GM12878 (cell line): ENCODE measurements at regions of chr17 and their contacts with region 1.

Region 1: GRCh38 chr17:13520899-13521572 is 80.7 kb downstream of the HS3ST3A1 start:
- DNase-seq: peak; percentile 13
- ATAC-seq: no peak
- H3K4me3 ChIP-seq: no peak overlapping the region
- H3K27ac ChIP-seq: no peak overlapping the region
- H3K4me1 ChIP-seq: no peaks in the 10 kb centered on the region
- H3K27me3 ChIP-seq: no peaks in the 10 kb centered on the region
- CTCF ChIP-seq: no peak
- EP300 ChIP-seq: no peak
- POLR2A ChIP-seq: no peak
- RAD21 ChIP-seq: no peak

Region 2: GRCh38 chr17:13457783-13458182 is 63.3 kb before region 1 on chr17:
- CTCF ChIA-PET with region 1: no interaction called
- POLR2A ChIA-PET with region 1: no interaction called
- RAD21 ChIA-PET with region 1: no interaction called
- SMC1A ChIA-PET with region 1: no interaction called
- in situ Hi-C with region 1: no loop called
- intact Hi-C with region 1: loop called (anchors 10 kb)
- DNase-seq: no peak
- ATAC-seq: no peak
- H3K4me3 ChIP-seq: no peak overlapping the region
- H3K27ac ChIP-seq: no peak overlapping the region
- H3K4me1 ChIP-seq: no peaks in the 10 kb centered on the region
- H3K27me3 ChIP-seq: no peaks in the 10 kb centered on the region
- CTCF ChIP-seq: no peak
- EP300 ChIP-seq: no peak
- POLR2A ChIP-seq: no peak
- RAD21 ChIP-seq: no peak

Region 3: GRCh38 chr17:13490906-13491482 is 30.0 kb before region 1 on chr17:
- CTCF ChIA-PET with region 1: interaction called, 6 read pairs
- POLR2A ChIA-PET with region 1: interaction called, 6 read pairs
- RAD21 ChIA-PET with region 1: interaction called, 4 read pairs
- SMC1A ChIA-PET with region 1: interaction called, 16 read pairs
- in situ Hi-C with region 1: no loop called
- intact Hi-C with region 1: no loop called
- DNase-seq: no peak
- ATAC-seq: no peak
- H3K4me3 ChIP-seq: no peak overlapping the region
- H3K27ac ChIP-seq: no peak overlapping the region
- H3K4me1 ChIP-seq: no peaks in the 10 kb centered on the region
- H3K27me3 ChIP-seq: no peaks in the 10 kb centered on the region
- CTCF ChIP-seq: no peak
- EP300 ChIP-seq: no peak
- POLR2A ChIP-seq: no peak
- RAD21 ChIP-seq: no peak

Region 4: DNA sequence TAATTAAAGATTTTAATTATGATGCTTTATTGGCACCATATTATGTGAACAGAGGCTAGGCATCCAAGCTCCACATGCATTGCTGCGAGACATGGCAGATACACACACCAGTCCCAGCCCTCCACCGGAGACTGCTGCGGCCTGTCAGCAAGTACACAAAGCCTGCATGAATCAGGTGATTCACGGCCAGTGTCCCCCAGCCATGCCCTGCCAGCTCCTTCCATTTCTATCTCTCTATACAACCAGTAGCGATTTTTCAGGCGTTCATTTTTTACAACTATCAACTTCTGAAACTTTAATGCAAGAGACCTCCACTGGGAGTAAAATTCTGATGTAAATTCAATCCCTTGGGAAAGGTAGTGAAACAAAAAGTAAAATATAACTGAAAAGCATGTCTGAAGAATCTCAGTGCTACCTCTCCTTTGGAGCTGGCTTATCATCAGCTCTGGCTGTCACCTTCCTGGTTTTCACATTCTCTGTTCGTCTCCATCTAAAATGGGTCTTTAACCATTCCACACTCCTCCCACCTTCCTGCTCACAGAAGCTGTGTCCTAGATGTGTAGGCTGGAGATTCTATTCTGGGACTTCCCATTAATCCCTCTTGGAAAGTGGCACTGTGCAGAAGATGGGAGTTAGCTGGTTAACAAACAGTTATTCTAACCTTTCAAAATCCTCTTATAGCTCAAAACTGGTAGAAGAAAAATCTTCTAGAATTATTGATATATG is 48.5 kb after region 1 on chr17:
- CTCF ChIA-PET with region 1: interaction called, 3 read pairs
- POLR2A ChIA-PET with region 1: no interaction called
- RAD21 ChIA-PET with region 1: interaction called, 7 read pairs
- SMC1A ChIA-PET with region 1: interaction called, 17 read pairs
- in situ Hi-C with region 1: no loop called
- intact Hi-C with region 1: no loop called
- DNase-seq: no peak
- ATAC-seq: no peak
- H3K4me3 ChIP-seq: no peak overlapping the region
- H3K27ac ChIP-seq: no peak overlapping the region
- H3K4me1 ChIP-seq: no peaks in the 10 kb centered on the region
- H3K27me3 ChIP-seq: no peaks in the 10 kb centered on the region
- CTCF ChIP-seq: no peak
- EP300 ChIP-seq: no peak
- POLR2A ChIP-seq: no peak
- RAD21 ChIP-seq: no peak